Sciatic nerve (tissue), 2 donors: ENCODE measurements at regions of chr2 and their contacts with region 1.

Region 1: GRCh38 chr2:222709191-222709891 is 37.9 kb downstream of the MOGAT1 start:
- DNase-seq: peak; percentile 73
- ATAC-seq: peak; percentile 96

Region 2: DNA sequence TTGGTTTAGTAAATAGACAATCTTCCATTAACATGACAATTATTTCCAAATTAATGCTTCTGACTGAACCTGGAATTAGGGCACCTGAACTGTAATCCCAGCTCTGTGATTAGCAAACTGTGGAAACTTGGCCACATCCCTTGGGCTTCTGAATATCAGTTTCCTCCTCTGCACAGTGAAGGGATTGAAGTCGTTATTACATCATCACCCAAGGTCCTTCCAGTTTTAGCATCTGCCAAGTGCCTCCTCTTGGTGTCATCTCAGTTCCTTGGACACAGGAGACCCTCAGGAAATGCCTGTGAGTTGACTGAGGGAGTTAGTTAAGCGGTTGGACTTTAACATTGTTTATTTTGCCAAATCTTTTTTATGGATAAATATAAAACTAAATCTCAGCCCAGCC is 27.0 kb after region 1 on chr2:
- intact Hi-C with region 1: loop called (anchors 1 kb)
- DNase-seq: no peak
- ATAC-seq: peak; percentile 65

Region 3: DNA sequence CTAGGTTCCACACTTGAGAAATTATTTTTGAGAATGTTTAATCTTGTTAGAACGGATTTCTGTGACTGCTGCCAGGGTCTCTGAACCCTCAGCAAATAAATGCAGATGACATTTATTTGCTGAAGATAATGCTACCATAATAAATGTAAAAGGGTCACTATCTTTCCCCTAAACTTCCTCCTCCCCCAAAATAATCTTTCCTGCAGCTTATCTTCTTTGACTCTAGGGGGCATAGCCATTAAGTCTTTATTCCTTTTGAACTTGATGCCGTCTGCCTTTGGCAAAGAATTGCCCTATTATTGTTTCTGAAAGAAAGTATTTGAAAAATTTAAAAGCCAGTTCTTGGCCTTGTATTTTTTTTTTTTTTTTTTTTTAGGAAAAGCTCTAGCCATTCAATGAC is 87.9 kb after region 1 on chr2:
- intact Hi-C with region 1: no loop called
- DNase-seq: no peak
- ATAC-seq: no peak